Psoas muscle (tissue), 8 donors: ENCODE measurements at regions of chr1 and their contacts with region 1.

Region 1: DNA sequence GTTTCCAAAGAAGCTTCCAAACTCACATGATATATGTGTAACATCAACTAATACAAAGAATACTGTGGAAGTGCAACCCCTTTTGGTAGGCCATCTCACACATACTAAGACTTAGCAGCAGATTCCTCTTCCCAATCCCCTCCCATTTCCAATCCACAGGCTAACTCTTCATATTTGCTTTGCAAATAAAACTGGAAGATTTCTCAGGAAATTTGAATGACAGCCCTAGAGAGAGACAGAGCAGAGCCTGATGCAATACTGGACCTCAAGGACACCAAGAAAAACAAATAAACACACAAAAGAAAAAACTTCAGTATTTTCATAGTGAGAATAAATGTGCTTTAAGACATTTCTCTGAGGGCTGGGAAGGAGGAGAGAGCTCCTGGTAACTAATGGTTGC is 190.3 kb upstream of the BRINP3 start:
- DNase-seq: no peak
- ATAC-seq: no peak
- H3K4me3 ChIP-seq: no peak overlapping the region
- H3K27ac ChIP-seq: no peak overlapping the region
- H3K4me1 ChIP-seq: no peaks in the 10 kb centered on the region
- H3K27me3 ChIP-seq: no peaks in the 10 kb centered on the region
- CTCF ChIP-seq: no peak

Region 2: GRCh38 chr1:190595438-190595837 is 72.5 kb before region 1 on chr1:
- intact Hi-C with region 1: no loop called
- DNase-seq: no peak
- ATAC-seq: no peak
- H3K4me3 ChIP-seq: no peak overlapping the region
- H3K27ac ChIP-seq: no peak overlapping the region
- H3K4me1 ChIP-seq: no peaks in the 10 kb centered on the region
- H3K27me3 ChIP-seq: no peaks in the 10 kb centered on the region
- CTCF ChIP-seq: no peak

Region 3: DNA sequence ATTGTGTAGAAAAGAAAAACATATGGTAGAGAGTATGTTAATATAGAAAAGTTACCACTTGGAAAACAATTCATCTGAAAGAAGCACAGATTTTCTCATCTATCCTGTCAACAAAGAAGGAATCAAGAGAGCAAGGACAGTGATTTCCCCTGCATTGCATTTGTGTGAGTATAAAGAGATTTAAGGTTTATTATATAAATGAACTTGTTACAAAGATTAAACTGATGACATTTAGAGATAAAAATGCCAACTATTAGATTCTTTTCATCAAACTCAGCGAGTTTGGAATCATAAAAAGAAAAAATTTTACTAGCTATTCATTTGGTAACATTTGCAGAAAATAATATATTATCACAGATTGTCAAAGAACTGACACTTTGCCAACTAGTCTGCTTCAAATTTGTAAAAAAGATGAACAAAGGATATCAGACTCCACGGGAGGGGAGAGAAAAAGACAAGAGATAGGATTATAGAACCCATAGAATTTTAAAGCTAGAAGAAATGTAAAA is 1649.1 kb after region 1 on chr1 and contains the start of gene RGS21:
- intact Hi-C with region 1: loop called in 1 of 2 experiments (anchors 5 kb)
- DNase-seq: no peak
- ATAC-seq: no peak
- H3K4me3 ChIP-seq: no peak within 1 kb of the TSS
- H3K27ac ChIP-seq: no peak within 1 kb of the TSS
- H3K4me1 ChIP-seq: no peaks in the 10 kb centered on the region
- H3K27me3 ChIP-seq: no peaks in the 10 kb centered on the region
- CTCF ChIP-seq: no peak
- total RNA-seq, gene RGS21: not detected